ENCODE measurements at regions of chr6 and their contacts with region 1.

Region 1: DNA sequence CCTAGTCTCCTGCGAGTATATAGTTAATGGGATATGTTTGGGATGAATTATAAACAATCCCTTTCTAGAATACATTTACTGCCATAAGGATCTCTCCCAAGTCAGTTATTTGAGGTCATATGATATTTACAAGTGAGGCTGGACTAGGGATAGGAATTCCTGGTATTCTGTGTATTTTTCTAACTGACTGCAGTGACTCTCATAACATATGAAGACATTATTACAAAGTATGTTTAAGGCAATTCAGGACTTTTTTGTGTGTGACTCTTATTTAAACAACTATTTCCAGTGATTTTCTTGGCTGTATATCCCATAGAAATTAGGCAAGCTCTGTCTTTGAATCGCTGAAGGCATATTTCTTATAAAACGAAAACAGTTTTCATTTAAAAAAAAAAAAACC is 18.4 kb upstream of the TNFAIP3 start:
- DNase-seq: no peak
- H3K4me3 ChIP-seq: no peak overlapping the region
- H3K27ac ChIP-seq: no peak overlapping the region
- H3K4me1 ChIP-seq: peaks cover 54% of the 10 kb centered on the region
- H3K27me3 ChIP-seq: no peaks in the 10 kb centered on the region
- CTCF ChIP-seq: no peak

Region 2: GRCh38 chr6:137657351-137658011 is 191.2 kb before region 1 on chr6:
- CTCF ChIA-PET with region 1: no interaction called
- POLR2A ChIA-PET with region 1: no interaction called
- intact Hi-C with region 1: no loop called
- DNase-seq: peak in 1 of 2 experiments; percentile 99
- H3K4me3 ChIP-seq: no peak overlapping the region
- H3K27ac ChIP-seq: peak overlapping the region; percentile 78
- H3K4me1 ChIP-seq: peaks cover 43% of the 10 kb centered on the region
- H3K27me3 ChIP-seq: no peaks in the 10 kb centered on the region
- CTCF ChIP-seq: no peak

Region 3: DNA sequence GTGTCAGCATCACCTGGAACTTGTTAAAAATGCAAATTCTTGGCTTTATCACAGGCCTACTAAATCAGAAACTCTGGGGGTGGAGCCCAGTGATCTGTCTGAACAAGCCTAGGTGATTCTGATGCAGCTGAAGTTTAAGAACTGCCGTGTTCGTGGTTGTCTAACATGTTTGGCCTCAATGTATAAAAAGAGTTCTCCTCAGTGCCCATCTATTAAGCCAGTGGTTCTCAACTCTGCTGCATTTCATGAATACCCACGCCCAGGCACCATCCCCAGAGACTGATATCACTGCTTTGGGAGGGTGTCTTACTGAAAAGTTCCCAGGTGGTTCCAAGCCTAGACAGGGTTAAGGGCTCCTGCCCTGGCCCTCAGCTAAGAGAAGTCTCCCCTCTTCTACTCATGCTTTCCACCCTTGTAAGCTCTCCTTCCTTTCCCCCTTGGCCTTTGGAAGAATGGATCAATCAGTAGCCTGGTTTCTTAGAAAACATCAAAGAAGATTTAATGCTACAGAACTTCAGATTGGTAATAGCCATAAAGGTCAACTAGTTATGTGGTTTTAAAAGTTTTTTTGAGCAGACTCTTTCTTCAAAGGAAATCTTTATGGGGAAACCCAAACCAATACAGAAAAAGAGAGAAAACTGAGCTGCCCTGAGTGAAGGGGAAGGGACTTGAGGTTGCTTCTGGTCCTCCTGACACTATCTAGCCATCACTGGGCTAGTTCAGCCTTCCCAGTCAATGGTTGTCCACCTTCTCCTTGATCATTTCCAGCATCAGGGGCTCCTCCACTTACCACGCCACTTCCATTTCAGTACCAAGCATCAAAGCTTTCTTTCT is 20.5 kb before region 1 on chr6:
- CTCF ChIA-PET with region 1: interaction called, 3 read pairs
- POLR2A ChIA-PET with region 1: no interaction called
- intact Hi-C with region 1: loop called (anchors 1 kb)
- DNase-seq: no peak
- H3K4me3 ChIP-seq: no peak overlapping the region
- H3K27ac ChIP-seq: peak overlapping the region; percentile 79
- H3K4me1 ChIP-seq: peaks cover 50% of the 10 kb centered on the region
- H3K27me3 ChIP-seq: no peaks in the 10 kb centered on the region
- CTCF ChIP-seq: no peak